ENCODE measurements at regions of chr2 and their contacts with region 1.

Region 1: DNA sequence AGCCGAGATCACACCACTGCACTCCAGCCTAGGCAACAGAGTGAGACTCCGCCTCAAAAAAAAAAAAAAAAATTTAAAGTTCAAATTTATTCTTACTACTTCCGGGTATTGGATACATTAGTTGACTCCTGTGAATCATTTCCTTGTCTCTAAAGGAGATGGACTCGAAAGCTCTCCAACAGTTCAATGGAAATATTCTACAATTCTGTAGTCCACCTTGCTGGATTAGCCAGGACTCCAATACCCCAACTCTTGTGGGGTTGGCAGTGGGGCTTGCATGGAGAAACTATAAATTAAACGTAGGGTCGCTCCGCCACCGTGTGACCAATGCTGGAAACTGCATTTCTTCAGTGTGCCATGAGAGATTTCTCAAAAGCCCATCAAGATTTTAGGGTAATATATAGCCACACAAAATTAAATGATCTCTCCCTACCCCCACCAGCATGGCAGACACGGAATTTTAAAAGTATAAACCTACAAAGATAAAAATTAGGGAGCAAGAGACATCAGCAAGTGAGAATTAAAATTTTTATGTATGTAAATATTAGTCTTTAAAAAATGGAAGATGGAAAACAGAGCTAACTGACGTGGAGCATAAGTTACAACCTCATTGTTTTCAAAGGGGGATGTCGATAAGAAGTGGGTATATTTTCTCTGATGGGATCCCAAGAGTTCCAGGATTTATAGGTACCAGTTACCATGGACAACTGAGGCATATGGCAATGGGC is 27.8 kb upstream of the GAREM2 start:
- DNase-seq: peak; percentile 47 to 82 (median 58)
- ATAC-seq: peak; percentile 66 to 74
- H3K4me3 ChIP-seq: no peak overlapping the region
- H3K27ac ChIP-seq: no peak overlapping the region
- H3K4me1 ChIP-seq: no peaks in the 10 kb centered on the region
- H3K27me3 ChIP-seq: no peaks in the 10 kb centered on the region

Region 2: DNA sequence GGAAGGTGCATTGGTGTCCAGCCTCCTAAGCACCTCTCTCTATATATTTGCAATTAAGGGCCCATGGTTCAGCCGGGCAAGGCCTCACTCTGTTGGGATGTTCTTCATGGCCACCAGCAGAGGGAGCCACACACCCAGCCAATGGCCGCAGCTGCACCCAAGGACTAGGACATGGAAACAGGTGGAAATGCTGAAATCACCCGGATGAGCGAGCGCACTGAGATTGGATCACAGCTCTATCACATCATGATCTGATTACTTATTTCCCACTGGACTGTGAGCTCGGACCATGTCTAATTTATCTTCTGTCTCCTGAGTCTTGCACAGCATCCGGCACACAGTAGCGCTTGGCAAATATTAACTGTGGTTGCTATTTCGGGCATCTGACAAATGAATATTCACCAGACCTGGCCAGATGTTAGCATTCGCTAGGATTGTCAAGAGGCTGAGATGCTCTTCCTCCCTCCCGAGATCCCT is 194.0 kb before region 1 on chr2:
- intact Hi-C with region 1: loop called in 2 of 4 experiments (anchors 2 to 5 kb)
- DNase-seq: peak; percentile 74 to 89 (median 77)
- ATAC-seq: peak; percentile 92 to 93
- H3K4me3 ChIP-seq: no peak overlapping the region
- H3K27ac ChIP-seq: no peak overlapping the region
- H3K4me1 ChIP-seq: no peaks in the 10 kb centered on the region
- H3K27me3 ChIP-seq: no peaks in the 10 kb centered on the region

Region 3: GRCh38 chr2:25991965-25992364 is 153.2 kb before region 1 on chr2:
- intact Hi-C with region 1: loop called in 3 of 4 experiments (anchors 2 to 5 kb)
- DNase-seq: no peak
- ATAC-seq: peak in 1 of 2 donors; percentile 36
- H3K4me3 ChIP-seq: no peak overlapping the region
- H3K27ac ChIP-seq: no peak overlapping the region
- H3K4me1 ChIP-seq: no peaks in the 10 kb centered on the region
- H3K27me3 ChIP-seq: no peaks in the 10 kb centered on the region

Region 4: GRCh38 chr2:26088032-26088643 is 57.0 kb before region 1 on chr2:
- intact Hi-C with region 1: loop called in 2 of 4 experiments (anchors 5 to 10 kb)
- DNase-seq: no peak
- ATAC-seq: peak; percentile 25 to 64
- H3K4me3 ChIP-seq: no peak overlapping the region
- H3K27ac ChIP-seq: no peak overlapping the region
- H3K4me1 ChIP-seq: no peaks in the 10 kb centered on the region
- H3K27me3 ChIP-seq: no peaks in the 10 kb centered on the region

Region 5: DNA sequence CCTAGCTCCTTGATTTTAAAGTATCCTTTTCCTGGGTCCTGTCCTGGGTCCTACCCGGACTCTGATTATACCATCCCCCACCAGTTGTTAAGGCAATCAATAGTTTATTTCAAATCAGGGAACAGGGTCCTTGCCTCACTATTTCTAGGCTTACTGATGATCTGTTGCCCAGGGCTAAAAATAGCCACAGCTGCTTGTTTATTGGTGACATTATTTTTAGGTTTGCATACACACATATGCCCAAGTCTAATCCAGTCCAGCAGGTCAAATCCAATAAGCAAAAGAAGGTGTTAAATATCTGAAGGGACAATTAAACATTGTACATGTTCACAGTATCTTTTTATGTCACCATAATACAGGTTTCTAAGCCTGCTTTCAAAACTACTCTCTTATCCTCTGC is 45.2 kb before region 1 on chr2:
- intact Hi-C with region 1: loop called in 1 of 4 experiments (anchors 10 kb)
- DNase-seq: no peak
- ATAC-seq: peak; percentile 24 to 44
- H3K4me3 ChIP-seq: no peak overlapping the region
- H3K27ac ChIP-seq: no peak overlapping the region
- H3K4me1 ChIP-seq: peaks cover 5% of the 10 kb centered on the region
- H3K27me3 ChIP-seq: no peaks in the 10 kb centered on the region

Region 6: DNA sequence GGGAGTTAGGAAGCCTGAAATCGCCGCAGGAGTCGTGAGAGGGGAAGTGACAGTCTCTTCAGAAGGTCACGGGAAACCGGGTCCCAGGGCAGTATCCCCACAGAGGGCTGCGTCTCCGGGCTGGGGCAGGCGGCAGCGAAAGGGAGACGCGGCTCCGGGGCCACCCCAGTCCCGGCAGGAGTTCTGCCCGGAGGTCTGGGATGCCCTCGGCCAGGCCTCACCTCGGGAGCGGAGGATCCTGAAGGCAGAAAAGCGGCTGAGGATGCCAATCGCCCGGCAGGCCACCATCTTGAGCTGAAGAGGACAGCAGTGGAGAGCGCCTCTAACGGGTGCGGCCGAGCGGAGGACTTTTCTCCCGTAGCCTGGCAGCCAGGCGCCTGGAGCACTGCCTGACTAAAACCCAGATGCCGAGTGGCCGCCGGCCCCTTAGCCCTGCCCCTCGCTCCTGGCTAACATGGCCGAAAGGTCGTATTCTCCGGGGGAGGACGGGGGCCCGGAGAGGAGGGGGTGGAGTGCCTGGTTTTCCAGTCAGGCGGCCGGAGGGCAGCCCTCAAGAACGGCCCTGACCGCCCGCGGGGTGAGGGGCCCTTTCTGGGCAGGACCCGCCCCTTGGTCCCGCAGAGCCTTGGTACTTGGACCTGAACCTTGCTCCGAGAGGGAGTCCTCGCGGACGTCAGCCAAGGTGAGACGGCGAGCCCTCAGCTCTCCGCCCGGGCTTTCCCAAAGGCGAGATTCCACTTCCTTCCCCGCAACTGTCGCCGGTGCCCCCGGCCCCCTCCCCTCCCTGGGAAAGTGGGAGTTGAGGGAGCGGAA is 99.4 kb after region 1 on chr2 and contains the starts of genes HADHA and HADHB:
- intact Hi-C with region 1: no loop called
- DNase-seq: peak; percentile 91 to 96 (median 96)
- ATAC-seq: peak; percentile 97
- H3K4me3 ChIP-seq: peak within 1 kb of the TSS; percentile 95
- H3K27ac ChIP-seq: peak within 1 kb of the TSS; percentile 97
- H3K4me1 ChIP-seq: no peaks in the 10 kb centered on the region
- H3K27me3 ChIP-seq: no peaks in the 10 kb centered on the region
- total RNA-seq, gene HADHA: 329 to 410 (median 375) TPM
- total RNA-seq, gene HADHB: 750 to 992 (median 857) TPM

Measured in right cardiac atrium (tissue), 5 donors.